ENCODE measurements at regions of chr9 and their contacts with region 1.

Region 1: GRCh38 chr9:96061293-96061987 is 185.9 kb downstream of the ERCC6L2 start:
- DNase-seq: peak; percentile 25 to 47
- ATAC-seq: peak; percentile 69 to 85; a peak in 5 of 6 replicates
- H3K4me3 ChIP-seq: no peak overlapping the region
- H3K27ac ChIP-seq: peak overlapping the region; percentile 39 to 50; a peak in 5 of 6 replicates
- H3K4me1 ChIP-seq: peaks cover 13% of the 10 kb centered on the region
- CTCF ChIP-seq: peak; percentile 33; the same call in 2 of the 3 replicates
- EP300 ChIP-seq: no peak
- POLR2A ChIP-seq: no peak
- RAD21 ChIP-seq: peak; percentile 47 to 54; a peak in 3 of 5 replicates

Region 2: GRCh38 chr9:96073531-96074480 is 12.4 kb after region 1 on chr9:
- CTCF ChIA-PET with region 1: interaction called, 10 read pairs
- POLR2A ChIA-PET with region 1: no interaction called
- DNase-seq: no peak
- ATAC-seq: no peak
- H3K4me3 ChIP-seq: no peak overlapping the region
- H3K27ac ChIP-seq: no peak overlapping the region
- H3K4me1 ChIP-seq: peaks cover 3% of the 10 kb centered on the region; the same call in 1 of the 3 replicates
- CTCF ChIP-seq: no peak
- EP300 ChIP-seq: no peak
- POLR2A ChIP-seq: no peak
- RAD21 ChIP-seq: no peak

Measured in A549 (cell line).